ENCODE measurements at regions of chr22 and their contacts with region 1.

Region 1: GRCh38 chr22:41022470-41023298 is 69.7 kb upstream of the EP300 start:
- DNase-seq: peak; percentile 89

Region 2: DNA sequence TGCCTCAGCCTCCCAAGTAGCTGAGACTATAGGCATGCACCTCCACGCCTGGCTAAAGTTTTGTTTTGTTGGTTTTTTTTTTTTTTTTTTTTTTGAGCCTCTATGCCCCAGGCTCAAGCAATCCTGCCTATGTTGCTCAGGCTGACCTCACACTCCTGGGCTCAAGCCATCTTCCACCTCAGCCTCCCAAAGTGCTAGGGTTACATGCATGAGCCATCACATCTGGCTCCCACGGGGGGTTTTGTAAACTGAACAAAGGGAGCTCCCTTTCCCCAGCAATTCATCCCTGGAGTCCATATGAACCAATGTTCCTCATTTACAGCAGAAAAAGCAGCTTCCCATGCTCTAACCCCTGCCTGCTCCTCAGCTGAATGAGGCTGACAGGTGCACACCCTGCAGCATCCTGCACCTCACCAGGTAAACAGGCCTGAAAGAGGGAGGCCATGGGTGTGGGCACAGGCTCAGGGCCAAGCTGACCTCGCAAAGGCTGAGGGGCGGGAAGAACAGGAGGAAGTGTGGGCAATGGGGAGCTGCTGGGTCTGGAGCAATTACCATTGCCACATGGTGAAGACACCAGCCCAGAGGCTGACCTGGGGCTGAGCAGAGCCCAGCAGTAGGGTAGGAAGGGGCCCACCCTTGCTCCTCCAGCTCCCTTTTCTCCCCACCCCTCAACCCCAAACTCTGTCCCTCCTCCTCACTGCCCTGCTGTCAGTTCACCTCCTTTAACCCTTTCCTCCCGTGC is 13.3 kb before region 1 on chr22:
- CTCF ChIA-PET with region 1: no interaction called
- POLR2A ChIA-PET with region 1: interaction called, 10 read pairs
- DNase-seq: no peak

Region 3: GRCh38 chr22:41048791-41049717 is 26.4 kb after region 1 on chr22:
- CTCF ChIA-PET with region 1: no interaction called
- POLR2A ChIA-PET with region 1: interaction called, 14 read pairs
- DNase-seq: peak; percentile 65

Region 4: DNA sequence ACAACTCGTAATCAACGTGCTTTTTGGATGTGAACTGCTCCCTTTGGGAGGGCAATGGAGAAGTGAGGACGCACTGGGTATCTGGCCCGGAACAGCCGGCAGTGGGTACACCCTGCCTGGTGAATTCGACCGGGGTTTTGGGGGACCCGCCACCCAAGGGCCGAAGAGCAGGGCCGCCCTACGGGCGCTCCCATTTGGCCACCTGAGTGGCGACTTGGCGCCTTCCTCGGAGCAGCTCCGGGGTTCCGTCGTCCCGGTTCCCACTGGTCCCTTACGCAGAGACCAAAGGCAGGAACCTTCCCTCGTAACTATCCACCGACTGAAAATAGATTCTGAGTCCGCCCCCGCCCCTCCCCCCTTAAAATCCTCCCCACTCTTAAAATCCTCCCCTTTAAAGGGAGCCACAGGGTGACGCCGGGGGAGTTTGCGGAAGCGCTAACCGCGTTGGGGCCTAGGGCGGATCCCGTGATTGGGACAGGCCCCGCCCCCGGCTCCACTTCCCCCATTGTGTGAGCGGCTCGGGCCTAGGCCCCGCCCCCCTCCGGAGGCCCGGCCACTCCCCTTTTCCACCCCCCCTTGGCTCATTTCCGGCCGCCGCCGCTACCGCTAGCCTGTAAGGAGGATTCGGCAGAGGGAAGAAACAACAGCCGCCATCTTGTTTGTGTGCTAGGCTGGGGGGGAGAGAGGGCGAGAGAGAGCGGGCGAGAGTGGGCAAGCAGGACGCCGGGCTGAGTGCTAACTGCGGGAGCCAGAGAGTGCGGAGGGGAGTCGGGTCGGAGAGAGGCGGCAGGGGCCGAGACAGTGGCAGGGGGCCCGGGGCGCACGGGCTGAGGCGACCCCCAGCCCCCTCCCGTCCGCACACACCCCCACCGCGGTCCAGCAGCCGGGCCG is 68.7 kb after region 1 on chr22:
- CTCF ChIA-PET with region 1: no interaction called
- POLR2A ChIA-PET with region 1: interaction called, 42 read pairs
- DNase-seq: peak; percentile 98

Measured in HEK293T (cell line).